Colonic mucosa (tissue), 4 donors: ENCODE measurements at regions of chr17 and their contacts with region 1.

Region 1: GRCh38 chr17:5065227-5065744 is 13.0 kb upstream of the ZFP3 start:
- DNase-seq: no peak
- H3K4me3 ChIP-seq: no peak overlapping the region
- H3K27ac ChIP-seq: no peak overlapping the region
- H3K4me1 ChIP-seq: no peaks in the 10 kb centered on the region
- H3K27me3 ChIP-seq: no peaks in the 10 kb centered on the region
- CTCF ChIP-seq: no peak

Region 2: DNA sequence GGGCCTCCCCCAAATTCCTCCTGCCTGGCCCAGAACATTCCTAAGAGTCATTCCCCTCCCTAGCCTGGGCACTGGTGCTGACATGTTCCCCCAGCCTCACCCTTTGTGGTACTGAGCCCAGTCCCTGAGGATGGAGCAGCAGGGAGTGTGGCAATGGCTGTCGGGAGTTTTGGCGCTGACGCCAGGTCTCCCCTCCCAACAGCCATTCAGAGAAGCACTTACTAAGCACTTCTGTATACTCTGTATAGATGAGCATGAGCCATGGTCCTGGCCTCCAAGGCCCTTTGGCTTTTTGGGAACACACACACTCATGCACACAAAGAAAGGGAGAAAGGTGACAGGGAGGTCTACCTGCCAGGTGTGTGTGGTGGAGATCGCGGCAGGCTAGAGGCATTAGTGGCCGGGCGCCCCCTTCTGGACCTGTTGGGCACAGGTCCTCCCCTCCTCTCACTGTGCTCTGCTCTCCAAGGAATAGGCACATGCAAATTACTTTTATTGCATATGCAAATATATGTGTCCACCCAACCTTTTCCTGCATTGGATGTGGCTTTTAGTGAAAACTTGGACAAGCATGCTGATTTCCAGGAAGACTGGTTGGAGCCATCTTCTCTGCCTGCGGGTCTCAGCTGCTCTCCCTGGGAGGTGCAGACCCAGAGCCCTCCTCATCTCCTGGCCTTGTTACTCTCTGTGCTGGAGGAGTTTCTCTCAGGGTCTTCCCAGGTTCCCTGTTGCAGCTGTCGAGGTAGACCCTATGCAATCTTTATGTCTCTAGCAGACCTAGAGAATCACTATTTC is 183.3 kb before region 1 on chr17:
- intact Hi-C with region 1: no loop called
- DNase-seq: peak; percentile 74
- H3K4me3 ChIP-seq: no peak overlapping the region
- H3K27ac ChIP-seq: no peak overlapping the region
- H3K4me1 ChIP-seq: no peaks in the 10 kb centered on the region
- H3K27me3 ChIP-seq: no peaks in the 10 kb centered on the region
- CTCF ChIP-seq: peak; percentile 92

Region 3: DNA sequence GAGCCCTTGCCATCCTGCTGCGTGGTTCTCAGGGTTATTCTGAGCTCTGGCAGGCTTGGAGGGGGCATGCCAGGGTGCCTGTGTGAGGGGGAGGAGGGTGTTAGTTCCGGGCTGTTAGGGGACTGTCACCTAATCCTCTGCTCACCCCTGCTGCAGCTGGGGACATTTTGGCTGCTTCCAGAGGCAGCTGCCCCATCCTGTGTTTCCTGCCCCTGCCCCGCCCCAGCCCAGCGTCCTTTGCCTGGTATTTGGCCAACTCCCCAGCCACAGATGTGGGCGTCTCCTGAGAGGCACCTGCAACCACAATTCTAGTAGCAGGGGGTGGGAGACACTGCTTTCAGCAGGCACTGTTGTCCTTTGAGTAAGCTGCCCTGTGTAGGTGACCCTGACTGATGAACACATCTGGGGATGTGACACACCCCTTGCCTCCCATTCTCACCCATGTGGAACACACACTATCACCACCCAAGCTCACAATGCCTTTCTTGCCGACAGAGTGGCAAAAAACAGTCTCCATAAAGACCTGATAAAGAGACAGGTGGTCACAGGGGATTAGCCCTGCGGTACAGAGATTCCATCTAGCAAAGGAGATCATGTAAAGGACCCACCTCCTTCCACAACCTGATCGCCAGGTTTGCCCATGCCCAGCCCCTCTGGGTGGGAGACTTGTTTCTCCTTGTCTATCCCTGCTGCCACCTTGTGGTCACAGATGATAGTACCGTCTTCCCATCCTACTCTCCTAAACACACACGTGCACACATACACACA is 162.1 kb before region 1 on chr17 and contains the start of gene CHRNE:
- intact Hi-C with region 1: no loop called
- DNase-seq: peak; percentile 92
- H3K4me3 ChIP-seq: no peak within 1 kb of the TSS
- H3K27ac ChIP-seq: no peak within 1 kb of the TSS
- H3K4me1 ChIP-seq: peaks cover 14% of the 10 kb centered on the region
- H3K27me3 ChIP-seq: peaks cover 3% of the 10 kb centered on the region
- CTCF ChIP-seq: peak; percentile 67
- total RNA-seq, gene CHRNE: 1.1 TPM in 1 of 2 donors, not detected in the other

Region 4: DNA sequence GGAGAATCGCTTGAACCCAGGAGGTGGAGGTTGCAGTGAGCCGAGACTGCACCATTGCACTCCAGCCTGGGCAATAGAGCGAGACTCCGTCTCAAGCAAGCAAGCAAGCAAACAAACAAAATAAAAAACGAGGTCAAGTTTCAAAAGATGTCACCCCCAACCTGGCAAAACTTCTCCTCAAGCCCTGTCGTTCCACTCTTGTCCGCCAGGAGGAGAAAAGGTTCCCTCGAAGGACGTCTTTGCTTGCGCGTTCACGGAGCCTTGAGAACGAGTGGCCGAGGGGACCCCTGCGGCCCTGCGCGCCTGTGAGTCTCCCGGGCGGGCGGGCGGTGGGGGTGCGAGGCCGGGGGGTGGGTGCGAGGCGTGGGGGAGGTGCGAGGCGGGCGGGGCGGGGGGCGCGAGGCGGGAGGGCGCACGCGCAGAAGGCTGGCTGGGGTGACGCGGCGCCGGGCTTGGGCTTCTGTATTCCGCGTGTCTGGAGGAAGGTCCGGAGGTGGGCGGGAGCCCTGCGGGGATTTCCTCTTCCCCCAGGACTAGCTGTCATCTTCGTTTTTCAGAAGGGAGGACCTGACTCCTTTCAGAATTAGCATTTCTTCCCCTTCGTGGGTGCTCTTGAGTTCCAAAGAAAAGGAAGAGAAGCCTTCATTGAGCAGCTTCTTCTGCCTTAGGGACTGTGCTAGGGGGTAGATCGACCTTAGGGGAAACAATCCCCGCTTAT is 33.8 kb before region 1 on chr17:
- intact Hi-C with region 1: loop called (anchors 1 kb)
- DNase-seq: peak; percentile 90
- H3K4me3 ChIP-seq: peak overlapping the region; percentile 42
- H3K27ac ChIP-seq: peak overlapping the region; percentile 27
- H3K4me1 ChIP-seq: no peaks in the 10 kb centered on the region
- H3K27me3 ChIP-seq: no peaks in the 10 kb centered on the region
- CTCF ChIP-seq: peak; percentile 68